Dorsolateral prefrontal cortex (tissue), 120 donors: ENCODE measurements at regions of chr15 and their contacts with region 1.

Region 1: GRCh38 chr15:64681424-64682024 is 93.9 kb downstream of the RBPMS2 start:
- DNase-seq: peak in 6 of 10 donors; percentile 26 to 63 (median 49)
- H3K4me3 ChIP-seq: no peak overlapping the region
- H3K27ac ChIP-seq: peak overlapping the region in 24 of 59 donors; percentile 5 to 61 (median 34)
- H3K27me3 ChIP-seq: no peaks in the 10 kb centered on the region
- CTCF ChIP-seq: peak; percentile 65 to 93 (median 86)

Region 2: DNA sequence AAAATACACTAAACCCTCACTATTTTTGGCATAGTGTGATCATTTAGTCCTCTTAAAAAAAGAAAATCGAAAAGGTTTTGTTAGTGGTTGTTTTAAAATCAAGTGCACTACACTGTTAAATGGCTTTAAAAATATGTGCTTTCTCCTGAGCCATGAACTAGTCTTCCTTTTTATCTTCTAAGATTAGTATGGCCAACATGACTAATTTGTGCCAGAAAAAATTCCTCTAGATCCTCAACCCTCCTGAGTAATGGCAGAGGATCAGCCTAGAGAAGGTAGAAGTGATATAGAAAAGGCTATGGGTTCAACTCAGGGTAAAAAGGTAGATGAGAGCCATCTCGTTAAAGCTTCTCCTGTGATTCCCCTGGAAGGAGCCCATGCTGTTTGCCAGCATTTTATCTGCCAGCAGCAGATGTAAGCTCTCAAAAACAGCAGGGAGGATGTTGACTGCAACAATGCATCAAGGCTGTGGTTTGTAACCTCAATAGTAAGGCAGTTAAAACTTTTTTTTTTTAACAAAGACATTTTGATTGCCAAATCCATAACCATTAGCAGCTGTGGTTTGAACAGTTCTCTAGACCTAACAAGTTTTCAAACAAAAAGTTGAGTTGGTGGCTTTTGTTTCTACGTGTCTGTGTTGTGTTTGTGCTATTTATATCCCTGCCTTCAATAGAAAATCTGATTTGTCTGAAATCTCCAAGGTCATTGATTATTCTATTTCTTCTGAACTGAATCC is 251.4 kb before region 1 on chr15:
- intact Hi-C with region 1: loop called (anchors 1 to 5 kb)
- DNase-seq: peak in 1 of 10 donors; percentile 5
- H3K4me3 ChIP-seq: no peak overlapping the region
- H3K27ac ChIP-seq: peak overlapping the region in 3 of 59 donors; percentile 18 to 51 (median 21)
- H3K27me3 ChIP-seq: no peaks in the 10 kb centered on the region
- CTCF ChIP-seq: no peak

Region 3: DNA sequence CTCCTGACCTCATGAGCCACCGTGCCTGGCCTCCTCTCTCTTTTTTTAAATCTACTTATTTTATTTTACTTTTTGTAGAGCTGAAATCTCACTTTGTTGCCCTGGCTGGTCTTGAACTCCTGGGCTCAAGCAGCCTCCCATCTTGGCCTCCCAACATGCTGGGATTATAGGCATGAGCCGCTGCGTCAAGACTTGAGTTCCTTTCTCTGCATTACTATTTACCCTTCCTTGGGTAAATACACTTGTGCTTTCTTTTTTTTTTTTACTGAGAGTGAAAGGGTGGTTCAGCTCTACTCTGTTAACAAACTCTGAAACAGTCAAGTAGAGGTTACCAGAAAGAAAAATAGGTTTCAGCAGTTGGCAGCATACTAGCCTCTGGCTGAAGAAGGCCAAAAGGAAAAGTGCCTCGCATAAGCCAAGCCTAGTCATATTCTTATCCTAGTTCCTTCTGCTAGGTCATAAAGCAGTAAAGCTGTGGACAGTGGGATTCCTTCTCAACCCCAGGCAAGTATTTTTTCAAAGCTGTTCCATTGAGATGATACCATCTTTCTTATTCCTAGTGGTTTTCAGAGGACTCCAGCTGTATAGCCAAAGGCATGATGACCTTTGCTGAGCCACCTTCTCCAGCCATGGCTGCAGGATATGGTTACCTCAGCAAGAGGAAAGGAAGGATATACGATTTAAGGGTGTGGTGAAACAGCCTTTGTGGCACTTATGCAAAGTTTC is 41.2 kb before region 1 on chr15:
- intact Hi-C with region 1: no loop called
- DNase-seq: no peak
- H3K4me3 ChIP-seq: no peak overlapping the region
- H3K27ac ChIP-seq: peak overlapping the region in 16 of 59 donors; percentile 2 to 71 (median 28)
- H3K27me3 ChIP-seq: no peaks in the 10 kb centered on the region
- CTCF ChIP-seq: no peak